MCF 10A (cell line): ENCODE measurements at regions of chr19 and their contacts with region 1.

Region 1: GRCh38 chr19:45178262-45179071 is at the start of gene BLOC1S3:
- DNase-seq: peak; percentile 100
- H3K4me3 Mint-ChIP-seq: peak within 1 kb of the TSS; percentile 87
- H3K27ac Mint-ChIP-seq: peak within 1 kb of the TSS; percentile 96
- H3K4me1 Mint-ChIP-seq: peaks cover 27% of the 10 kb centered on the region
- H3K27me3 Mint-ChIP-seq: no peaks in the 10 kb centered on the region
- CTCF ChIP-seq: no peak
- total RNA-seq, gene BLOC1S3: 14.0 and 18.1 TPM in 2 replicates

Region 2: DNA sequence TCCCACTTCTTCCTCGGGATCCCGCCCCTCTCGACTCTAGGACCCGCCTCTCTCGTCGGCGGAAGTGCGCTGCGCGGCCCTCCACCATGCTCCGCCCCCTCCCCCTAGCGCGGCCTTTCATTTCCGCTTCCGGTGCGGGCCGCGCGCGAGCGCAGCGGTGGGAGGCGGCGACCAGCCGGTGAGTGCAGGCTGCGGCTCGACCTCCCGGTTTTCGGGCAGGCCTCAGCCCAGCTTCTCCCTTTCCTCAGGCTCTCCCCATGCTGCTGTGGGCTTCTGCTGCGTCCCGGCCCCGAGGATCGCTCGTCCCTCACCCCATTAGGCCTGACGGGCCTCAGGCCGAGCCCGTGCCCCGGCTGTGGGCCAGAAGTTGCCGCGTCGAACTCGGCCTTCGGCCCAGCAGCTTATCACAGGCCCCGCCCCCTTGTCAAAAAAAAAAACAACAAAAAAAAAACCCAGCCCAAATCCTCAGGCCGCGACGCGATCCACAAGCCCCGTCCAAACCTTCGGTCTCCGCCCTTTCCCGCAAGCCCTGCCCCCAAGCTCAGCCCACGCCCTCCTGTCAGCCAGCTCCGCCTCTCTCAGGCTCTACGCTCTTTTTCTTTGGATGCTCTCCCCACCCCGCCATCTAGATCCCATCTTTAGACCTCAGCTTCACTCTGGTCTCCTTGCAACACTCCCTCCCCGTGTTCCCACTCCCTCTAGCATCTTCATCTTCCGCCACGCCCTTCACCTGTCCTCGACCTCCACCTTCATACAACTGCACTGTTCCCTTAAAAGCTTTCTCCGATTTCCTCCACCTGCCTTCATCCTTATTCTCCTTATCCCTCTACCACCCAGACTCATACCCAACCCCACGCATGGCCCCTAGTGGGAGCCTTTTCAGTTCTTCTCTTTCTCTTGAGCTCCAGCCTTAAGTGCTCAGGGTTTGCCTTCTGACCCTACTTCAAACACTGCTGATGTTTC is 139.3 kb before region 1 on chr19 and contains the start of gene CLASRP:
- CTCF ChIA-PET with region 1: no interaction called
- POLR2A ChIA-PET with region 1: interaction called, 13 read pairs
- intact Hi-C with region 1: no loop called
- DNase-seq: peak; percentile 91
- H3K4me3 Mint-ChIP-seq: peak within 1 kb of the TSS; percentile 95
- H3K27ac Mint-ChIP-seq: peak within 1 kb of the TSS; percentile 99
- H3K4me1 Mint-ChIP-seq: peaks cover 22% of the 10 kb centered on the region
- H3K27me3 Mint-ChIP-seq: no peaks in the 10 kb centered on the region
- CTCF ChIP-seq: no peak
- total RNA-seq, gene CLASRP: 71.7 and 83.5 TPM in 2 replicates

Region 3: GRCh38 chr19:45092747-45093678 is 85.5 kb before region 1 on chr19 and contains the start of gene PPP1R37:
- CTCF ChIA-PET with region 1: interaction called, 6 read pairs
- POLR2A ChIA-PET with region 1: interaction called, 61 read pairs
- intact Hi-C with region 1: loop called (anchors 5 kb)
- DNase-seq: peak; percentile 99
- H3K4me3 Mint-ChIP-seq: peak within 1 kb of the TSS; percentile 87
- H3K27ac Mint-ChIP-seq: peak within 1 kb of the TSS; percentile 98
- H3K4me1 Mint-ChIP-seq: peaks cover 45% of the 10 kb centered on the region
- H3K27me3 Mint-ChIP-seq: no peaks in the 10 kb centered on the region
- CTCF ChIP-seq: no peak
- total RNA-seq, gene PPP1R37: 22.0 and 22.5 TPM in 2 replicates

Region 4: GRCh38 chr19:45164577-45165335 is 13.7 kb before region 1 on chr19:
- CTCF ChIA-PET with region 1: interaction called, 5 read pairs
- POLR2A ChIA-PET with region 1: interaction called, 47 read pairs
- intact Hi-C with region 1: no loop called
- DNase-seq: peak; percentile 95
- H3K4me3 Mint-ChIP-seq: no peak overlapping the region
- H3K27ac Mint-ChIP-seq: no peak overlapping the region
- H3K4me1 Mint-ChIP-seq: peaks cover 27% of the 10 kb centered on the region
- H3K27me3 Mint-ChIP-seq: no peaks in the 10 kb centered on the region
- CTCF ChIP-seq: no peak

Region 5: GRCh38 chr19:45231891-45232290 is 53.4 kb after region 1 on chr19:
- CTCF ChIA-PET with region 1: no interaction called
- POLR2A ChIA-PET with region 1: interaction called, 13 read pairs
- intact Hi-C with region 1: no loop called
- DNase-seq: peak; percentile 79
- H3K4me3 Mint-ChIP-seq: no peak overlapping the region
- H3K27ac Mint-ChIP-seq: no peak overlapping the region
- H3K4me1 Mint-ChIP-seq: peaks cover 12% of the 10 kb centered on the region
- H3K27me3 Mint-ChIP-seq: peaks cover 4% of the 10 kb centered on the region
- CTCF ChIP-seq: no peak